ENCODE measurements at regions of chr3 and their contacts with region 1.

Region 1: DNA sequence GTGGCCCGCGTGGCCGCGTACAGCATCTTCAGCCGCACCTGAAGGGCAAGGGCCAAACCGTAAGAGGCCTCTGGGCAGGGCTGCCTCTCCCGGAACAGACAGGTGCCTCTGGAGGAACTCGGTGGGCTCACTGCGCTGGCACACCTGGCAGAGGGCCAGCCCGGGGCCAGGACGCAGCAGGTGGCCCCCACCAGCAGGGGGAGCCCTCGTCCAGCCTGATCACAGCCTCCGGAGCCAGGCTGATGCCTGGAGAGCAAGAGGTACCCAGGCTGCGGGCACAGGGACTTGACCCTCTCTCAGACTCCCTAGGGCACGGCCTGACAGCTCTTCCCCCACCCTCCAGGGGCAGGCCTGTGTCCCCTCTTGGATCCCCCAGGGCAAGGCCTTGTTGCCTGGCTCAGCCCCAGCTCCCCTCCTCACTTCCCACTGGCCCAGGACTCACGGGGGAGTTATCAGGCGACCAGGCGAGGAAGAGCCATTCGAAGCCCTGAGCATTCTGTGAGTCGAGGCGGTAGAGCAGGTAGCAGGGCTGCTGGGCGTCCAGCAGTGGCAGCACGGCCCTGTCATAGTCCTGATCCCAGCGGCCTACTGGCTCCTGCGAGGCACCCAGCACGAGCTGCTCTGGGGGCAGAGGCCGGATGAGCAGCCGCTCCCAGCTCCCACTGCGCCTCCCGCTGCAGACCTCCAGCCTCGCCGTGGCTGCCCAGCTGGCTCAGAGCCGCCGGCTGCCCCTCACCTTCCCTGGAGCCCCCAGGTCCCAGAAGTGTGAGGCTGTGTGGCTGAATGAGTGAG is 6.3 kb upstream of the TLR9 start:
- DNase-seq: peak; percentile 91
- H3K4me3 Mint-ChIP-seq: no peak overlapping the region
- H3K27ac Mint-ChIP-seq: peak overlapping the region; percentile 74
- H3K4me1 Mint-ChIP-seq: peaks cover 55% of the 10 kb centered on the region
- H3K27me3 Mint-ChIP-seq: no peaks in the 10 kb centered on the region

Region 2: GRCh38 chr3:52220380-52221026 is 11.2 kb before region 1 on chr3:
- CTCF ChIA-PET with region 1: interaction called, 64 read pairs
- DNase-seq: peak; percentile 94
- H3K4me3 Mint-ChIP-seq: peak overlapping the region; percentile 55
- H3K27ac Mint-ChIP-seq: peak overlapping the region; percentile 75
- H3K4me1 Mint-ChIP-seq: peaks cover 96% of the 10 kb centered on the region
- H3K27me3 Mint-ChIP-seq: no peaks in the 10 kb centered on the region

Region 3: DNA sequence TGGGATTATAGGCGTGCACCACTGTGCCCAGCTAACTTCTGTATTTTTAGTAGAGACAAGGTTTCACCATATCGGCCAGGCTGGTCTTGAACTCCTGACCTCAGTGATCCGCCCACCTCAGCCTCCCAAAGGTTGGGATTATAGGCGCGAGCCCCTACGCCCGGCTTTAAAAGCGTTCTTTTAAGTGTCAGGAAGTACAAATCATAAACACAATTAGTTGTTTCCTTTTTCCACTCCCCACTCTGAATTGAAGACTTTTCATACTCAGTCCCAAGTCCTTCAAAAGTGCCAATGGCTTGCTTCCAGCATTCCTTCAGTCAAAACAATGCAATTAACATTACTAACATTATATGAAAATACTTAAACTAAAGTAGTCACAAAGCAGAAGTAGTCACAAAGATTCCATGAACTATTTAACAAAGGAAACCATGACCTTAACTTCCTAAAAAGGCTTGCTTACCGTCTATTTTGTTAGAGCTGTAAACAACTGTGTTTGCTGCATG is 38.6 kb after region 1 on chr3:
- CTCF ChIA-PET with region 1: interaction called, 106 read pairs
- DNase-seq: no peak
- H3K4me3 Mint-ChIP-seq: peak overlapping the region; percentile 70
- H3K27ac Mint-ChIP-seq: peak overlapping the region; percentile 98
- H3K4me1 Mint-ChIP-seq: peaks cover 92% of the 10 kb centered on the region
- H3K27me3 Mint-ChIP-seq: no peaks in the 10 kb centered on the region

Region 4: GRCh38 chr3:52291508-52292181 is 59.9 kb after region 1 on chr3:
- CTCF ChIA-PET with region 1: interaction called, 16 read pairs
- DNase-seq: peak; percentile 71
- H3K4me3 Mint-ChIP-seq: no peak overlapping the region
- H3K27ac Mint-ChIP-seq: peak overlapping the region; percentile 35
- H3K4me1 Mint-ChIP-seq: peaks cover 29% of the 10 kb centered on the region
- H3K27me3 Mint-ChIP-seq: no peaks in the 10 kb centered on the region

Region 5: DNA sequence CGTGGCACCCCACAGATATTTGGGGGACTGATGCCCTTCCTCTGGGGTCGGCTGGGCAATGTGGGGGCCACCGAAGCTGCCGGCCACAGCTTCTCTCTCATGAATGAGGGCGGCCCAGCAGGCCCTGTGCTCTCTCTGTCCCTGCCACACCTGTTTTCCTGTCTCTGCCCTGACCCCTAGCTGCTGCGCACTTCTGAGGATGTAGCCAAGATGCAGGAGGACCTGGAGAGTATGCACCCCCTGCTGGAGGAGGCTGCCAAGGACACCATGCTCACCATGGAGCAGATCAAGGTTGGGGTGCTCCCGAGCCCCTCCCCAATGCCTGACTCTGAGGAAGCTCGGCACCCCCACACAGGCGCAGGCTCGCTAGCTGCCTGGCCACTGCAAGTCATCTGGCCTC is 153.5 kb after region 1 on chr3:
- CTCF ChIA-PET with region 1: interaction called, 18 read pairs
- DNase-seq: peak; percentile 64
- H3K4me3 Mint-ChIP-seq: no peak overlapping the region
- H3K27ac Mint-ChIP-seq: no peak overlapping the region
- H3K4me1 Mint-ChIP-seq: no peaks in the 10 kb centered on the region
- H3K27me3 Mint-ChIP-seq: no peaks in the 10 kb centered on the region